ENCODE measurements at regions of chr22 and their contacts with region 1.

Region 1: GRCh38 chr22:31970490-31971444 is 26.4 kb downstream of the YWHAH start:
- DNase-seq: peak; percentile 82 to 93 (median 86)
- H3K4me3 ChIP-seq: peak overlapping the region; percentile 39 to 61
- H3K4me3 Mint-ChIP-seq: peak overlapping the region; percentile 81 to 95 (median 86)
- H3K27ac ChIP-seq: peak overlapping the region; percentile 10
- H3K27ac Mint-ChIP-seq: peak overlapping the region; percentile 73 to 94 (median 85)
- H3K4me1 ChIP-seq: peaks cover 19% of the 10 kb centered on the region
- H3K4me1 Mint-ChIP-seq: peaks cover 5 to 19% (median 13%) of the 10 kb centered on the region in 4 donors
- H3K27me3 ChIP-seq: no peaks in the 10 kb centered on the region
- H3K27me3 Mint-ChIP-seq: no peaks in the 10 kb centered on the region

Region 2: GRCh38 chr22:31561238-31561887 is 409.4 kb before region 1 on chr22:
- CTCF ChIA-PET with region 1: no interaction called
- POLR2A ChIA-PET with region 1: no interaction called
- intact Hi-C with region 1: no loop called
- DNase-seq: peak in 4 of 5 donors; percentile 23 to 33 (median 30)
- H3K4me3 ChIP-seq: no peak overlapping the region
- H3K4me3 Mint-ChIP-seq: no peak overlapping the region
- H3K27ac ChIP-seq: no peak overlapping the region
- H3K27ac Mint-ChIP-seq: peak overlapping the region; percentile 29 to 73 (median 59)
- H3K4me1 ChIP-seq: no peaks in the 10 kb centered on the region
- H3K4me1 Mint-ChIP-seq: peaks cover 3 to 8% (median 6%) of the 10 kb centered on the region in 4 donors
- H3K27me3 ChIP-seq: no peaks in the 10 kb centered on the region
- H3K27me3 Mint-ChIP-seq: no peaks in the 10 kb centered on the region

Region 3: DNA sequence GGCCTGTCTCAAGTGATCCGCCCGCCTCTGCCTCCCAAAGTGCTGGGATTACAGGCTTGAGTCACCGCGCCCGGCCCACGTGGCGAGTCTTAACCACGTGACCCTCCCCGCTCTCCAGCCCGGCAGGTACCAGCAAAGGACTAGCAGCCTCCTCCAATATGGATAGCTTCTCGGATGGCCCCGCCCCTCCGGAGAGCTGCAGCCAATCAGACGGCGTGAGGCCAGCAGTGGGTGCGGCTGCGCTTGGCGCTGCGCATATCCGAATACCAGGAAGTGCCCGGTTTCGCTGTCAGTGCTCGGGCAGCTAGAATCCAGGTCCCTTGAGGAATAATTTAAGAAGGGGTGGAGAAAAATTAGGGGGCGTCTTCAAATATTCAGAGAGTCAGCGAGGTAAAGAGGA is 294.1 kb before region 1 on chr22:
- CTCF ChIA-PET with region 1: interaction called, 12 read pairs
- POLR2A ChIA-PET with region 1: interaction called, 3 read pairs
- intact Hi-C with region 1: no loop called
- DNase-seq: peak; percentile 89 to 94 (median 89)
- H3K4me3 ChIP-seq: peak overlapping the region; percentile 65 to 80
- H3K4me3 Mint-ChIP-seq: peak overlapping the region; percentile 92 to 100 (median 96)
- H3K27ac ChIP-seq: peak overlapping the region; percentile 76
- H3K27ac Mint-ChIP-seq: peak overlapping the region; percentile 91 to 100 (median 97)
- H3K4me1 ChIP-seq: peaks cover 3% of the 10 kb centered on the region
- H3K4me1 Mint-ChIP-seq: peaks cover 10 to 13% (median 12%) of the 10 kb centered on the region in 4 donors
- H3K27me3 ChIP-seq: no peaks in the 10 kb centered on the region
- H3K27me3 Mint-ChIP-seq: no peaks in the 10 kb centered on the region

Region 4: GRCh38 chr22:31872209-31872608 is 98.6 kb before region 1 on chr22:
- CTCF ChIA-PET with region 1: interaction called, 12 read pairs
- POLR2A ChIA-PET with region 1: no interaction called
- intact Hi-C with region 1: loop called (anchors 1 kb)
- DNase-seq: peak in 4 of 5 donors; percentile 6 to 14 (median 10)
- H3K4me3 ChIP-seq: no peak overlapping the region
- H3K4me3 Mint-ChIP-seq: no peak overlapping the region
- H3K27ac ChIP-seq: no peak overlapping the region
- H3K27ac Mint-ChIP-seq: peak overlapping the region in 1 of 7 donors; percentile 15
- H3K4me1 ChIP-seq: no peaks in the 10 kb centered on the region
- H3K4me1 Mint-ChIP-seq: peaks cover 0 to under 1% (median 0%) of the 10 kb centered on the region in 4 donors
- H3K27me3 ChIP-seq: no peaks in the 10 kb centered on the region
- H3K27me3 Mint-ChIP-seq: no peaks in the 10 kb centered on the region

Region 5: DNA sequence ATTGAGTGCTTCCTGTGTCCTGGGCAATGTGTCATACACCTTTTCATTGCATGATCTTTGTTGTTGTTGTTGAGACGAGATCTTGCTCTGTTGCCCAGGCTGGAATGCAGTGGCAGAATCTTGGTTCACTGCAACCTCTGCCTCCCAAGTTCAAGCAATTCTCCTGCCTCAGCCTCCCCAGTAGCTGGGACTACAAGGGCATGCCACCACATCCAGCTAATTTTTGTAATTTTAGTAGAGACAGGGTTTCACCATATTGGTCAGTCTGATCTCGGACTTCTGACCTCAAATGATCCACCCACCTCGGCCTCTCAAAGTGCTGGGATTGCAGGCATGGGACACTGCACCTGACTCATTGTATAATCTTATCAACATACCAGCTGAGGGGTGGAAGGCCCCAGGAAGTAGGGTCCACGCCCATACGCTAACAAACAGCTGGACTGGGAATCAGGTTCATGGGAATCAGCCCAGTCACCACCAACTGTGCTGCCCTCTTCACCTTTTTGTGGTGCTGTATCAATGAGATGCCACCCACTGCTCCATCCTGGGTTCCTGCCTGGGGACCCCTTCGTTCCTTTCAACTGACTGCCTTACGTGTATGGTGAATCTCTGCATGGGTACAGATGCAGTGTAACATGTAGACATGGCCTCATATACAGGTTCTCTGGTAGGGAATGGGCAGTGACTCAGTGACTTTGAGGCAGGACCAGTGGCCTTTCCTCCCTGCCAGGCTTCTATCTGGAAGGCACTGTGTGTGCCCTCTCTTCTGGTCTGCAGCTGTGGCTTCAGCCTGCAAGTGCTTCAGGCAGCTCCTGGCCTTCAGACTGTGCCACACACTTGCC is 59.0 kb before region 1 on chr22:
- CTCF ChIA-PET with region 1: no interaction called
- POLR2A ChIA-PET with region 1: no interaction called
- intact Hi-C with region 1: no loop called
- DNase-seq: no peak
- H3K4me3 ChIP-seq: no peak overlapping the region
- H3K4me3 Mint-ChIP-seq: no peak overlapping the region
- H3K27ac ChIP-seq: no peak overlapping the region
- H3K27ac Mint-ChIP-seq: peak overlapping the region in 1 of 7 donors; percentile 59
- H3K4me1 ChIP-seq: no peaks in the 10 kb centered on the region
- H3K4me1 Mint-ChIP-seq: peaks cover 0 to 1% (median 0%) of the 10 kb centered on the region in 4 donors
- H3K27me3 ChIP-seq: no peaks in the 10 kb centered on the region
- H3K27me3 Mint-ChIP-seq: no peaks in the 10 kb centered on the region

Region 6: DNA sequence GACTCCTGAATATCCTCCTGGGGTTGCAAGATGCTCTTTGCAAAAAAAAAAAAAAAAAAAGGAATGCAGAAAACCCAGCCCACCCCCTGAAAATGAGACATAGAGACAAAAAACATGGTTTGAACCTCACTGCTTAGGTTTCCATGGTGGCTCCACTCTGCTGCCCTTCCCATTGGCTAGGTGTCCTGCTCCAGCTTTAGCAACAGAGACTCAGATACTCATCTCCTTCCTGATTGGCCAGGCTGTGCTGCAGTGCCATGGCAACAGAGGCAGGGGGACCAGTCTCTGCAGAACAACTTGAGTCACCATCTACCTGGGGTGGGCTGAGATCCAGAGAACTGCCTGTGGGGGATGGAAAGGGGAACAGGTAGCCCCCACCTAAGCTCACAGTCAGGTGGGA is 43.8 kb before region 1 on chr22:
- CTCF ChIA-PET with region 1: no interaction called
- POLR2A ChIA-PET with region 1: no interaction called
- intact Hi-C with region 1: no loop called
- DNase-seq: no peak
- H3K4me3 ChIP-seq: no peak overlapping the region
- H3K4me3 Mint-ChIP-seq: no peak overlapping the region
- H3K27ac ChIP-seq: no peak overlapping the region
- H3K27ac Mint-ChIP-seq: no peak overlapping the region
- H3K4me1 ChIP-seq: no peaks in the 10 kb centered on the region
- H3K4me1 Mint-ChIP-seq: peaks cover 0 to 5% (median 3%) of the 10 kb centered on the region in 4 donors
- H3K27me3 ChIP-seq: no peaks in the 10 kb centered on the region
- H3K27me3 Mint-ChIP-seq: peaks cover 11 to 22% of the 10 kb centered on the region in 2 donors

Region 7: GRCh38 chr22:31952459-31952858 is 18.3 kb before region 1 on chr22:
- CTCF ChIA-PET with region 1: interaction called, 95 read pairs
- POLR2A ChIA-PET with region 1: interaction called, 16 read pairs
- intact Hi-C with region 1: loop called (anchors 1 kb)
- DNase-seq: no peak
- H3K4me3 ChIP-seq: no peak overlapping the region
- H3K4me3 Mint-ChIP-seq: peak overlapping the region in 4 of 8 donors; percentile 52 to 67 (median 62)
- H3K27ac ChIP-seq: peak overlapping the region; percentile 61
- H3K27ac Mint-ChIP-seq: peak overlapping the region; percentile 71 to 97 (median 89)
- H3K4me1 ChIP-seq: peaks cover 79% of the 10 kb centered on the region
- H3K4me1 Mint-ChIP-seq: peaks cover 57 to 75% (median 66%) of the 10 kb centered on the region in 4 donors
- H3K27me3 ChIP-seq: no peaks in the 10 kb centered on the region
- H3K27me3 Mint-ChIP-seq: no peaks in the 10 kb centered on the region

Region 8: GRCh38 chr22:32080904-32081303 is 110.1 kb after region 1 on chr22:
- CTCF ChIA-PET with region 1: interaction called, 14 read pairs
- POLR2A ChIA-PET with region 1: no interaction called
- intact Hi-C with region 1: no loop called
- DNase-seq: peak in 4 of 5 donors; percentile 29 to 46 (median 33)
- H3K4me3 ChIP-seq: no peak overlapping the region
- H3K4me3 Mint-ChIP-seq: no peak overlapping the region
- H3K27ac ChIP-seq: no peak overlapping the region
- H3K27ac Mint-ChIP-seq: no peak overlapping the region
- H3K4me1 ChIP-seq: no peaks in the 10 kb centered on the region
- H3K4me1 Mint-ChIP-seq: no peaks in the 10 kb centered on the region
- H3K27me3 ChIP-seq: no peaks in the 10 kb centered on the region
- H3K27me3 Mint-ChIP-seq: peaks cover 5 to 8% of the 10 kb centered on the region in 2 donors

Region 9: DNA sequence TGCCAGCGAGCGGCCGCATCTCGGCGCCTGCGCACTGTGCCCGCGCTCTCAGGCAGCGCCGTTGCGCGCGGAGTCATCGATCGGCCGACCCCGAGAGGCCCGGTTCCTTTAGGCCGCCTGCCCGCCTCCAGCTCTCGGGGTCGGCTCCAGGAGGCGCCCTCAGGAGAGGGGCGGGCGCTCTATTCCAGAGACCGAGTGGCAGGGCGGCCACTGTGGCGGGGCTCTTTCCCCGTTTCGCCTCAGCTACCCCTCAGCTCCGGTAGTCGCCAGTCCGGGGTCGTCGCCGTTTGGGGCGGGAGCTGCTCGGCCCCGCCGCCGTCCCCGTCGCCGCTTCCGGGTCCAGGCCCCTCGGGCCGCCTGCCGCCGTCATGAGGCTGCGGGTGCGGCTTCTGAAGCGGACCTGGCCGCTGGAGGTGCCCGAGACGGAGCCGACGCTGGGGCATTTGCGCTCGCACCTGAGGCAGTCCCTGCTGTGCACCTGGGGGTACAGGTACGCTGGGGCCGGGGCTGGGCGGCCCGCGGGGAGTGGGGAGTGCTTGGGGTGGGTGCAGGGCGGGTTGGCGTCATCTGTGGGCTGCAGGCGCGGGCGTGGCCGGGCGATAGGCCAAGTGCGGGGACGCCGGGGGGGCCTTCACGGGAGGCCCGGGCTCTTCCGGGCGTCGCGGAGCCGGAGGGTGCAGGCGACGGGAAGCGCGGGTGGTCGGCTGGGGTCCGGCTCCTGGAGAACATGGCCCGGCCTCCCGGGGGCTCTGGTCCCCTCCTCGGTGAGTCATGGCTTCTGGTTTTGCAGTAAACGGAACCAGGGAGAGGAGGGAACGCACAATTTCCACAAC is 504.1 kb after region 1 on chr22 and contains the start of gene FBXO7:
- CTCF ChIA-PET with region 1: interaction called, 23 read pairs
- POLR2A ChIA-PET with region 1: no interaction called
- intact Hi-C with region 1: loop called (anchors 2 kb)
- DNase-seq: peak; percentile 84 to 88 (median 86)
- H3K4me3 ChIP-seq: peak within 1 kb of the TSS; percentile 72 to 91
- H3K4me3 Mint-ChIP-seq: peak within 1 kb of the TSS; percentile 95 to 98 (median 97)
- H3K27ac ChIP-seq: peak within 1 kb of the TSS; percentile 95
- H3K27ac Mint-ChIP-seq: peak within 1 kb of the TSS; percentile 92 to 98 (median 96)
- H3K4me1 ChIP-seq: peaks cover 41% of the 10 kb centered on the region
- H3K4me1 Mint-ChIP-seq: peaks cover 20 to 45% (median 31%) of the 10 kb centered on the region in 4 donors
- H3K27me3 ChIP-seq: no peaks in the 10 kb centered on the region
- H3K27me3 Mint-ChIP-seq: no peaks in the 10 kb centered on the region
- total RNA-seq, gene FBXO7: 89.3 to 95.3 TPM